Cardiac septum (tissue), 1 donor: ENCODE measurements at regions of chr9 and their contacts with region 1.

Region 1: GRCh38 chr9:116087246-116087645 is 66.3 kb upstream of the PAPPA start:
- DNase-seq: no peak

Region 2: DNA sequence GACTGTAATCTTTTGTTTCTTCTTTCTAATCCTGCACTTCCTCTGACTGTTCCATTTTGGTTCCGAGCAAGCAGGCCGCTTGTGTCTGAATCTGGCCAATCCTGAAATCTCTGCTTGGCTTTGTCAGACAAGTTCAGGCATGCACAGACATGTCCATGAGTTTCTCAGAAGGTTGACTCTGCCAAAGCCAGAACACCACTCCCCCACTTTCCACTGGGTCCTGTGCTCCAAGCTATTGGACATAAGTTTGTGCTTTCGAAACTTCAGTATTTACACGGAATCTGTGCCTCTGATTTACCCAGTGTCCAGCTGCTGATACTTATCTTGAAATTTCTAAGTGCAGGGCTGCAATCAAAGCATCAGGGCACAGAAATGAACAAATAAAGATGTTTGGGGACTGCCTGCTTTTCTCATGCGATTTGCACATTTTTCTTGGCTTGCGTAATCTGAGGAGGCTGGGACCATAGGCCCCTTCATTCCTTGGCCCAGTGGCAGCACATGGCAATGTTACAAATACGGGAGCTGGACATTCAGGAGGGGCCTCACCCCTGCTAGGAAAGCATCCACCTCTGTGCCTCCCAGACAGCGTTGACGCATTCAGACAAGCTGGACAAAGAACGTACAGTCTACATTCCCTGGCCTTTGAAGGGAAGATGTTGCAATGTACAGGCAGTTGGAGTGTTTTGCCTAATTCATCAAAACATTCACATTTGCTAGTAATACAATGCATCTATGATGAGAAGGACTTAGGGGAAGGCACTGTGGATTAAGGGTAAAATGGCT is 142.9 kb before region 1 on chr9:
- intact Hi-C with region 1: loop called (anchors 10 kb)
- DNase-seq: no peak

Region 3: DNA sequence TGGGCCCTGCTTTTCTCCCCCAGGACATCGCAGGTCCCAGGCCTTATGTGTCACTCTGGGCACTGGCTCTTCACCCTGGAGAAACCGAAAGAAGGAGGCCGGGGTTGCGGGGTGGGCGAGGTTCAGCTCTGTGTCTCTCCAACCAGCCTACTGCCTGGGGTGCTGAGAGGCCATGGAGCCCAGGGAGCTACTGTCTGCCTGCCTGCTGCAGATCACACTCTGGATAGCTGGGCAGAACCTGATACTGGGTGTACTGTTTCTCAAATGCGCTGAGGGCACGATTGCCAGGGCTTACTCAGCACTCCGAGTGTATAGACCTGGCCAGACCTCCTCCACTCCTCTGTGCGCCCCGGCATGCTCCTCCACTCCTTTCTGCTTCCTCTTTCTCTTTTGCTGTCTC is 281.4 kb after region 1 on chr9:
- intact Hi-C with region 1: no loop called
- DNase-seq: no peak